ENCODE measurements at regions of chr13 and their contacts with region 1.

Region 1: DNA sequence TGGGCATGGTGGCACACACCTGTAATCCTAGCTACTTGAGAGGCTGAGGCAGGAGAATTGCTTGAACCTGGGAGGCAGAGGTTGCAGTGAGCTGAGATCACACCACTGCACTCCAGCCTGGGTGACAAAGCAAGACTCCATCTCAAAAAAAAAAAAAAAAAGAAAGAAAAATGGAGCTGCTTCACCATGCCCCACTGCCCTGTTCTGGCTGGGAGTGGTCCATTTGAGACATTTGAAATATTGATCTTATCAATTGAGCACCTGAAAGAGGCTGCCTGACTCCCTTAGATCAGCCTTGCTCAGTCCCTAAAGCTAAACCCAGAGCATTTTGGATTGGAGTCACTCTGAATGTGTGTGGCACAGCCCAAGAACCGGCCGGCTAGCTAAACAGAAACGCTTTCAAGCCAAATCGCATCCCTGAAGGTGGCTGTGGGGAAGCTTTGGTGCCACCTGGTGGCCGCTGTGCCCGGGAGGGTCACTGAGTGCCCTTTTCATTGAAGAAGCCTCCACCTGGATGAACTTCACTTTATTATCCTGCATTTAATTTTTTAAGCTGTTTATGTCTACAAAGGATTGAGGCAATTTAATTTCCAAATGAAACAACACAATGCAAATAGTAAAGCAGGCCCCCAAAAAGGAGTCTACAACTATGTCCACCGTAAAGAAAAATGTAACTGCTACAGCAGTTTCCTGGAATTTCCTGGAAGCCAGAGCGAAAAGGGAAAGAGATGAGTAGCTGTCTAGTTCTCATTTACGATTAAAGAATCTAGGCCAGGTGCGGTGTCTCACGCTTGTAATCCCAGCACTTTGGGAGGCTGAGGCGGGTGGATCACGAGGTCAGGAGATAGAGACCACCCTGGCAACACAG is 53.1 kb upstream of the SERPINE3 start:
- DNase-seq: peak; percentile 95
- H3K4me3 ChIP-seq: no peak overlapping the region
- H3K27ac ChIP-seq: no peak overlapping the region
- H3K4me1 ChIP-seq: peaks cover 9 to 23% (median 14%) of the 10 kb centered on the region in 4 donors
- H3K27me3 ChIP-seq: no peaks in the 10 kb centered on the region
- CTCF ChIP-seq: peak; percentile 88 to 94 (median 91)
- EP300 ChIP-seq: no peak
- POLR2A ChIP-seq: no peak

Region 2: GRCh38 chr13:51125498-51126226 is 160.7 kb before region 1 on chr13:
- intact Hi-C with region 1: loop called (anchors 5 kb)
- DNase-seq: peak; percentile 89
- H3K4me3 ChIP-seq: no peak overlapping the region
- H3K27ac ChIP-seq: no peak overlapping the region
- H3K4me1 ChIP-seq: no peaks in the 10 kb centered on the region
- H3K27me3 ChIP-seq: no peaks in the 10 kb centered on the region
- CTCF ChIP-seq: peak; percentile 59 to 74 (median 59)
- EP300 ChIP-seq: no peak
- POLR2A ChIP-seq: no peak

Region 3: GRCh38 chr13:51148952-51149573 is 137.3 kb before region 1 on chr13:
- intact Hi-C with region 1: loop called (anchors 1 kb)
- DNase-seq: no peak
- H3K4me3 ChIP-seq: no peak overlapping the region
- H3K27ac ChIP-seq: peak overlapping the region in 1 of 4 donors; percentile 21
- H3K4me1 ChIP-seq: peaks cover 0 to 13% (median 5%) of the 10 kb centered on the region in 4 donors
- H3K27me3 ChIP-seq: no peaks in the 10 kb centered on the region
- CTCF ChIP-seq: peak; percentile 54 to 76 (median 67)
- EP300 ChIP-seq: no peak
- POLR2A ChIP-seq: no peak

Region 4: DNA sequence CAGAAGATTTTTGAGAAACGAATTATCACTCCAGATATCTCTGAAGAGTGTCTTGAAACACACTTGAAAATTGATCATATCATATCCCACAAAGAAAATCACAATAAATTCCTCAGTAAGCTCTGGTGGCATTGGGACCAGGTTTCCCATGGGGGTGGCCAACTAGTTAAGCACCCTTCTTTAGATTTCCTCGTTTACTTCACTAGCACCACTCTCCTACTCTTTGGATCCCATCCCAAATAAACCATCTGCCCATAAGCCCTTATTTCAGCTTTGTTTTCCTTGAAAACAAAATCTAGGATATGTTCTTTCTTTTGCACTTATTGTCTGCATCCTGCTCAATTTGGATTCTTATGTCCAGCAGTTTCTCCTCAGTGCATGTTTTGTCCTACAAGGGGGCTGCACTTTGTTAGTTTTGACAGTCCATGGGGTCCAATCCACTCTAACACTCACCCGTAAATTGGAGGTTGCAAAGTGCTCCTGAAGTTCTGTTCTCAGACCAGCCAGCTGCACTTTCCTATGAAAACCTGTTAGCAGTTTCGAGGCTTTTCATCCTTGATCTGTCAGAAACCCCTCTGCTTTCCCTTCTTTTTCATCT is 104.5 kb before region 1 on chr13:
- intact Hi-C with region 1: no loop called
- DNase-seq: peak; percentile 55
- H3K4me3 ChIP-seq: no peak overlapping the region
- H3K27ac ChIP-seq: no peak overlapping the region
- H3K4me1 ChIP-seq: no peaks in the 10 kb centered on the region
- H3K27me3 ChIP-seq: peaks cover 0 to 2% (median 0%) of the 10 kb centered on the region in 4 donors
- CTCF ChIP-seq: no peak
- EP300 ChIP-seq: no peak
- POLR2A ChIP-seq: no peak

Region 5: GRCh38 chr13:51222037-51222685 is 64.2 kb before region 1 on chr13 and contains the start of gene FAM124A:
- intact Hi-C with region 1: loop called (anchors 2 kb)
- DNase-seq: no peak
- H3K4me3 ChIP-seq: peak within 1 kb of the TSS; percentile 84 to 99 (median 97)
- H3K27ac ChIP-seq: peak within 1 kb of the TSS; percentile 80 to 91 (median 90)
- H3K4me1 ChIP-seq: peaks cover 15 to 54% (median 44%) of the 10 kb centered on the region in 4 donors
- H3K27me3 ChIP-seq: no peaks in the 10 kb centered on the region
- CTCF ChIP-seq: peak in 2 of 3 experiments; percentile 45 to 51
- EP300 ChIP-seq: no peak
- POLR2A ChIP-seq: no peak
- total RNA-seq, gene FAM124A: 17.0 to 30.3 (median 21.0) TPM